Breast epithelium (tissue), 4 donors: ENCODE measurements at regions of chr12 and their contacts with region 1.

Region 1: GRCh38 chr12:80838708-80839107 is 99.0 kb downstream of the LIN7A start:
- DNase-seq: no peak
- H3K4me3 ChIP-seq: no peak overlapping the region
- H3K27ac ChIP-seq: no peak overlapping the region
- H3K4me1 ChIP-seq: no peaks in the 10 kb centered on the region
- H3K27me3 ChIP-seq: no peaks in the 10 kb centered on the region
- CTCF ChIP-seq: no peak
- POLR2A ChIP-seq: no peak

Region 2: GRCh38 chr12:80861623-80862378 is 23.1 kb after region 1 on chr12:
- intact Hi-C with region 1: loop called (anchors 1 kb)
- DNase-seq: no peak
- H3K4me3 ChIP-seq: no peak overlapping the region
- H3K27ac ChIP-seq: no peak overlapping the region
- H3K4me1 ChIP-seq: no peaks in the 10 kb centered on the region
- H3K27me3 ChIP-seq: no peaks in the 10 kb centered on the region
- CTCF ChIP-seq: no peak
- POLR2A ChIP-seq: no peak